ENCODE measurements at regions of chr14 and their contacts with region 1.

Region 1: GRCh38 chr14:106511006-106511799 is 984.8 kb downstream of the TMEM121 start:
- DNase-seq: peak; percentile 82
- ATAC-seq: peak; percentile 79
- H3K4me3 Mint-ChIP-seq: peak overlapping the region; percentile 56
- H3K27ac Mint-ChIP-seq: peak overlapping the region; percentile 93
- H3K4me1 Mint-ChIP-seq: peaks cover 71% of the 10 kb centered on the region
- H3K27me3 Mint-ChIP-seq: peaks cover 17% of the 10 kb centered on the region

Region 2: GRCh38 chr14:105939810-105940508 is 571.2 kb before region 1 on chr14:
- CTCF ChIA-PET with region 1: no interaction called
- POLR2A ChIA-PET with region 1: no interaction called
- DNase-seq: no peak
- ATAC-seq: no peak
- H3K4me3 Mint-ChIP-seq: no peak overlapping the region
- H3K27ac Mint-ChIP-seq: no peak overlapping the region
- H3K4me1 Mint-ChIP-seq: peaks cover 8% of the 10 kb centered on the region
- H3K27me3 Mint-ChIP-seq: peaks cover 13% of the 10 kb centered on the region

Region 3: GRCh38 chr14:106491851-106492250 is 19.4 kb before region 1 on chr14:
- CTCF ChIA-PET with region 1: interaction called, 63 read pairs
- POLR2A ChIA-PET with region 1: interaction called, 3 read pairs
- DNase-seq: peak; percentile 47
- ATAC-seq: no peak
- H3K4me3 Mint-ChIP-seq: no peak overlapping the region
- H3K27ac Mint-ChIP-seq: no peak overlapping the region
- H3K4me1 Mint-ChIP-seq: peaks cover 34% of the 10 kb centered on the region
- H3K27me3 Mint-ChIP-seq: peaks cover 2% of the 10 kb centered on the region

Region 4: DNA sequence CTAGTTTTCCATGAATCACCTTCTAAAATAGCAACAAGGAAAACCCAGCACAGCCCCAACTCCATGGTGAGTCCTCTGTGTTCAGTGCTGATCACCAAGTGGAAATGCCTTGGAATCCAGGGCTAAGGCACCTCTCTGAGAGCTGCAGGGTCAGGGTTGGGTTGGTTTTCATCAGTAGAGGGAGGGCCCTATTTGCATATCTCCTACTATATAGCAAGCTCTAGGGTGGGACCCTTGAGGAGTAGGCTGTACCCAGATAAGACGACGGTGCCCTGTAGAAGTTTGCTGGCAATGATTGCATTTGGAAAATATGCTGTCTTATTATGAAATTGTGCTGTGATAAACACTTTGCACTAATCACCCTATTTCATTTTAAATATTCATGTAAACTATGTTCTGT is 27.0 kb after region 1 on chr14:
- CTCF ChIA-PET with region 1: interaction called, 44 read pairs
- POLR2A ChIA-PET with region 1: interaction called, 3 read pairs
- DNase-seq: no peak
- ATAC-seq: no peak
- H3K4me3 Mint-ChIP-seq: no peak overlapping the region
- H3K27ac Mint-ChIP-seq: no peak overlapping the region
- H3K4me1 Mint-ChIP-seq: peaks cover 14% of the 10 kb centered on the region
- H3K27me3 Mint-ChIP-seq: peaks cover 39% of the 10 kb centered on the region

Region 5: DNA sequence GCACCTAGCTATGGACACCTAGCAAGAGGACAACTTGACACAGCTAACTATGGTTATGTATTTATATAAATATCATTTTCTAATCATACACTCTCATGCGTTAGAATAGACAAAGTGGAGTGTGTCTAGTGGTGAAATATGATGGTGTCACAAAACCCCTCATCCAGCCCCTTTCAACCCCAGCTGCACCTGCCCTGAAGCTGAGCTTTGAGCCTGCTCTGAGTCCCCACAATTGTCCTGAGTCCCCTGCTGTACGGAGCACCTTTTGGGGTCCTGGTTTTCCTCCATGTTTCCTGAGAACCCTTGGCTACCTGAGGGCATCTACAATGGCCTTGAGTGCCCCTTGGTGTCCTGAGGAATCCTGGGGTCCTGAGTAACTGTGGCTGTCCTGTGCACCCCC is 88.0 kb after region 1 on chr14:
- CTCF ChIA-PET with region 1: no interaction called
- POLR2A ChIA-PET with region 1: no interaction called
- DNase-seq: no peak
- ATAC-seq: no peak
- H3K4me3 Mint-ChIP-seq: no peak overlapping the region
- H3K27ac Mint-ChIP-seq: no peak overlapping the region
- H3K4me1 Mint-ChIP-seq: no peaks in the 10 kb centered on the region
- H3K27me3 Mint-ChIP-seq: peaks cover 56% of the 10 kb centered on the region

Measured in activated CD8-positive, alpha-beta T cell treated with anti-CD3 and anti-CD28 coated beads, Interleukin-2, amount 10 ng/mL, durations not matched to agents 7 days and 5 days (primary cell).